CD14-positive monocyte (primary cell): ENCODE measurements at regions of chr10 and their contacts with region 1.

Region 1: DNA sequence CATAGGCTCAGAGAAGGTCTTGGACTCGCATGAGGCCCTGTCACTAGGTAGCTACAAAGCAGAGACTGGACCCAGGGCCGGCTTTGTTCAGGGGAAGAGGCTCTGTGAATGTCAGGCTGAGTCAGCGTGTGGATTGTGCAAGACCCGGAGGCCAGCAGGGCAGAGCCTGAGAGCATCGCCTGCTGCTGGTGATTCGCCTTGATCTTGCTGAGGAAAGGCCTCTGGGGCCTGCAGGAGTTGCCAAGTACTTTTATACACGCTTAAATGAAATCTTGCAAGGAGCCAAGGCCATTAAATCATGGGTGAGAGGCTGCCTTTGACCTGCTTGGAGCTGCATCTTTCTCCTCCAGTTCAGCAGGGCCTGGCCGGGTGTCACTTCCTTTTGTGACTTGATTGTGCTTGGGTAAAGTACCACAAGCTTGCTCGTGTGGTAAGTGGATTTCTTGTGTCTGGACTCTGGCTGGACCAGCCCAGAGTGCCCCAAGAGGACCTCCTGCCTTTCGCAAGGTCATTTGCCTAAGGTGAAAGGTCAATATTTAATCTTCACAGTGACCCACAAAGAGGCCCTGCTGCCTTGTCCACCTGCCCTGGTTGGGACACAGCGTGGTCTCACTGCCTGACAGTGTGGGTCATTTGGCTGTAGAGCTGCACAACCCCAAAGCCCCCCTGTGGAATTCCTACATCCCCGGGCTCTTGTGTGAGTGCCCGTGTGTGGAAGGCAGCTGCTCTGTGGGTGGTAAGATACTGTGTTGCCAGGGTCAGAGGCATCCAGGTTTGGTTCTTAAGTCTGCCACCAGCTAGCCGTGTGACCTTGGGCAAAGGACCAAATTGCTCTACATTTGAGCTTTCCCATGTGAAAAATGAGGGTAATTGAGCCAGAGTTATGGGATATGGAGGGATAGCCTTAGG is 38.6 kb upstream of the SH2D4B start:
- DNase-seq: peak; percentile 94 to 97 (median 95)
- H3K4me3 ChIP-seq: peak overlapping the region in 1 of 3 experiments; percentile 60
- H3K4me3 Mint-ChIP-seq: peak overlapping the region; percentile 45 to 85
- H3K27ac ChIP-seq: peak overlapping the region; percentile 92 to 95
- H3K27ac Mint-ChIP-seq: peak overlapping the region; percentile 94 to 99 (median 97)
- H3K4me1 ChIP-seq: peaks cover 96 to 100% of the 10 kb centered on the region in 2 donors
- H3K4me1 Mint-ChIP-seq: peaks cover 99% of the 10 kb centered on the region
- H3K27me3 ChIP-seq: no peaks in the 10 kb centered on the region
- H3K27me3 Mint-ChIP-seq: no peaks in the 10 kb centered on the region
- CTCF ChIP-seq: no peak

Region 2: GRCh38 chr10:80437231-80437630 is 61.9 kb before region 1 on chr10:
- intact Hi-C with region 1: no loop called
- DNase-seq: no peak
- H3K4me3 ChIP-seq: no peak overlapping the region
- H3K4me3 Mint-ChIP-seq: no peak overlapping the region
- H3K27ac ChIP-seq: no peak overlapping the region
- H3K27ac Mint-ChIP-seq: no peak overlapping the region
- H3K4me1 ChIP-seq: no peaks in the 10 kb centered on the region
- H3K4me1 Mint-ChIP-seq: no peaks in the 10 kb centered on the region
- H3K27me3 ChIP-seq: peaks cover 0 to 3% of the 10 kb centered on the region in 2 donors
- H3K27me3 Mint-ChIP-seq: peaks cover 0 to 3% (median 0%) of the 10 kb centered on the region in 3 donors
- CTCF ChIP-seq: no peak

Region 3: GRCh38 chr10:80459047-80459931 is 39.8 kb before region 1 on chr10:
- intact Hi-C with region 1: loop called (anchors 2 to 5 kb)
- DNase-seq: peak; percentile 66 to 69 (median 68)
- H3K4me3 ChIP-seq: peak overlapping the region in 2 of 3 experiments; percentile 3 to 96
- H3K4me3 Mint-ChIP-seq: peak overlapping the region; percentile 71 to 86
- H3K27ac ChIP-seq: peak overlapping the region; percentile 80 to 92
- H3K27ac Mint-ChIP-seq: peak overlapping the region; percentile 86 to 97 (median 95)
- H3K4me1 ChIP-seq: peaks cover 90 to 91% of the 10 kb centered on the region in 2 donors
- H3K4me1 Mint-ChIP-seq: peaks cover 87% of the 10 kb centered on the region
- H3K27me3 ChIP-seq: no peaks in the 10 kb centered on the region
- H3K27me3 Mint-ChIP-seq: peaks cover 0 to 3% (median 2%) of the 10 kb centered on the region in 3 donors
- CTCF ChIP-seq: no peak

Region 4: GRCh38 chr10:80487791-80488538 is 11.1 kb before region 1 on chr10:
- intact Hi-C with region 1: loop called (anchors 2 kb)
- DNase-seq: peak; percentile 78 to 85 (median 82)
- H3K4me3 ChIP-seq: peak overlapping the region in 1 of 3 experiments; percentile 66
- H3K4me3 Mint-ChIP-seq: peak overlapping the region; percentile 56 to 80
- H3K27ac ChIP-seq: peak overlapping the region; percentile 84 to 90
- H3K27ac Mint-ChIP-seq: peak overlapping the region; percentile 91 to 98 (median 95)
- H3K4me1 ChIP-seq: peaks cover 100% of the 10 kb centered on the region in 2 donors
- H3K4me1 Mint-ChIP-seq: peaks cover 98% of the 10 kb centered on the region
- H3K27me3 ChIP-seq: no peaks in the 10 kb centered on the region
- H3K27me3 Mint-ChIP-seq: peaks cover 0 to 5% (median 0%) of the 10 kb centered on the region in 3 donors
- CTCF ChIP-seq: no peak